Sigmoid colon (tissue), 7 donors: ENCODE measurements at regions of chr19 and their contacts with region 1.

Region 1: GRCh38 chr19:53520550-53521372 is 17.2 kb upstream of the ZNF331 start:
- DNase-seq: peak; percentile 99
- H3K4me3 ChIP-seq: peak overlapping the region; percentile 38 to 56 (median 52)
- H3K27ac ChIP-seq: peak overlapping the region; percentile 88 to 90 (median 88)
- H3K4me1 ChIP-seq: peaks cover 0 to 14% (median 11%) of the 10 kb centered on the region in 4 donors
- H3K27me3 ChIP-seq: no peaks in the 10 kb centered on the region
- CTCF ChIP-seq: no peak
- EP300 ChIP-seq: peak; percentile 46 to 98 (median 86)
- POLR2A ChIP-seq: no peak

Region 2: GRCh38 chr19:53467485-53468262 is 53.1 kb before region 1 on chr19 and contains the start of gene ZNF813:
- intact Hi-C with region 1: loop called (anchors 5 kb)
- DNase-seq: peak; percentile 97
- H3K4me3 ChIP-seq: peak within 1 kb of the TSS; percentile 71 to 80 (median 74)
- H3K27ac ChIP-seq: peak within 1 kb of the TSS; percentile 74 to 79 (median 75)
- H3K4me1 ChIP-seq: peaks cover 0 to 15% (median 13%) of the 10 kb centered on the region in 4 donors
- H3K27me3 ChIP-seq: peaks cover 0 to 27% (median 0%) of the 10 kb centered on the region in 3 donors
- CTCF ChIP-seq: no peak
- EP300 ChIP-seq: no peak
- POLR2A ChIP-seq: no peak
- total RNA-seq, gene ZNF813: 2.9 to 4.2 (median 3.4) TPM